ENCODE measurements at regions of chr1 and their contacts with region 1.

Region 1: DNA sequence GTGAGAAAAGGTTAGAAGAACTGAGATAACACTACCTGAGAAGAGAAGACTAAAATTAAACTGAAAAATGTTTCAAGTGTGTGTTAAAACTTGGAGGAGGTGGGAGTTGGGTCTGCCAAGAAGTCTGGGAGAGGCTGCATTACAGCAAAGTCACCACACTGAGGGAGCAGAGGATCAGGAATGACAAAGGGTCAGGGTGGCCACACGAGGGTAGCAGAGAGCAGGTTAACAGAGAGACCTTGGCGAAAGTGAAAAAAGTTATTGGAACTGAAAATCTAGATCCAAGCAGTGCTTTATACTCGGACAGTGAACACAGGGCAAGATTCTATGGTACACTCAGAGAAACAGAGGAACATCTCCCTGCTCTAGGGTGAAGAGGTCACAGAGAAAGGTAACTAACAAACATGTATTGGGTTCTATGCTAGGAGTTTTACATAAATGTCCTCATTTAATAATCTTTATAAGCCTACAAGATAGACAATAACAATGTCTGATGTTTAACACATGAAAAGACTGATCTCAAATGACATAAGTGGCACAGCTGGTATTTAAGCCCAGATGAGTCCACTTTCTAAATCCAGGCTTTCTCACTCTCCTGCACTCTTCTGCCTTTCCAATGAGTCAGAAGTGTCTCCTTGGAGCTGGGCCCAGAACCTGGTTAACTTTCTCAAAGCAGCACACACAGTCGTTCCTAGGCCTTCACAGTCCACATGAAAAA is 10.3 kb upstream of the CADM3 start:
- DNase-seq: peak; percentile 93
- H3K4me3 ChIP-seq: peak overlapping the region; percentile 64
- H3K27ac ChIP-seq: peak overlapping the region; percentile 60
- H3K4me1 ChIP-seq: peaks cover 7% of the 10 kb centered on the region
- H3K27me3 ChIP-seq: peaks cover 10% of the 10 kb centered on the region

Region 2: DNA sequence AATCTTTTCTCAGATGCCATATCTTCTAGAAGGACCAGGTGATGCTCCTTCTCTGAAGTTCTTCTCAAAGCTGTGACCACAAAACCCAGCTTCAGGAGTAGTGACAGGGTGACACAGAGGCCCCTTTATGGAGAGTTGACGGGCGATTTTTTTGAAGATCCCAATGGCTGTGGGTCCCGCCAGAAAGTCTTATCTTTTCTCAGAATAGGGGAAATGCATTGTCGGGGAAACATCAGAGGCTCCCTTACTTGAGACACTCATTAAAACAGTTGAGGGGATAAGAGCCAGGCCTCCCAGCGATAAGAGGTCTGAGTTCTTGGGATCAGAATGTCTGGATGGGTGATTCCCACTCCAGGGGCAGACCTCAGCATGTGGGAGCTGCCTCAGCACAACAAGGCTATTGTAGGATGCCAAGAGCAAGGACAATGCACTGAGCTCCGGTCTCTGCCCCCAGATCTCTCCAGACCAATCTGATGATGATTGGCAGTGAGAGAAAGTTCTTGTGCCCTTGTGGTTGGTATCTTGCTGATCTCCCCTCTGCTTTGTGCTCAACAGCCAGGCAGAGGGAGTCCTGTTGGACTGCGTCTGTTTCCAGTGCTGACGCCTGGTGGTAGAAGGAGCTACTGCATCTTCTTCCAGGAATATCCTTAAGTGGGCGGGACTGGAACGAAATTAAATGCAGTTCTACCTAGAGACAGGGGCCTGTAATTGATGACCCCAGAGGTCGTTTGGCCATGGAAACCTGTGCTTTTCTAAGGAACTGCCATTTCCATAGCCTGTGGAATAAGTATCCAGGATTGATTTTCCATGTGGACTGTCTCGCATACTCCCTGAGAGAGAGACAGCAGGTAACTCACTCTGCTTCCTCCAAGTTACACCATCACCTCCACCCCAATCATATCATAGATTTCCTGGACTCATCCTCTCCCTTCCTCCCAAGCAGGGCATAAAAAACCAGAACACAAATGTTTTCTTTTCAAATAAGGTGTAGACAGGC is 36.7 kb after region 1 on chr1:
- in situ Hi-C with region 1: loop called (anchors 5 kb)
- DNase-seq: peak; percentile 84
- H3K4me3 ChIP-seq: no peak overlapping the region
- H3K27ac ChIP-seq: no peak overlapping the region
- H3K4me1 ChIP-seq: no peaks in the 10 kb centered on the region
- H3K27me3 ChIP-seq: no peaks in the 10 kb centered on the region; the same call in 1 of the 2 replicates

Region 3: GRCh38 chr1:159505676-159506075 is 344.5 kb after region 1 on chr1:
- in situ Hi-C with region 1: no loop called
- DNase-seq: no peak
- H3K4me3 ChIP-seq: no peak overlapping the region
- H3K27ac ChIP-seq: no peak overlapping the region
- H3K4me1 ChIP-seq: no peaks in the 10 kb centered on the region
- H3K27me3 ChIP-seq: no peaks in the 10 kb centered on the region

Region 4: DNA sequence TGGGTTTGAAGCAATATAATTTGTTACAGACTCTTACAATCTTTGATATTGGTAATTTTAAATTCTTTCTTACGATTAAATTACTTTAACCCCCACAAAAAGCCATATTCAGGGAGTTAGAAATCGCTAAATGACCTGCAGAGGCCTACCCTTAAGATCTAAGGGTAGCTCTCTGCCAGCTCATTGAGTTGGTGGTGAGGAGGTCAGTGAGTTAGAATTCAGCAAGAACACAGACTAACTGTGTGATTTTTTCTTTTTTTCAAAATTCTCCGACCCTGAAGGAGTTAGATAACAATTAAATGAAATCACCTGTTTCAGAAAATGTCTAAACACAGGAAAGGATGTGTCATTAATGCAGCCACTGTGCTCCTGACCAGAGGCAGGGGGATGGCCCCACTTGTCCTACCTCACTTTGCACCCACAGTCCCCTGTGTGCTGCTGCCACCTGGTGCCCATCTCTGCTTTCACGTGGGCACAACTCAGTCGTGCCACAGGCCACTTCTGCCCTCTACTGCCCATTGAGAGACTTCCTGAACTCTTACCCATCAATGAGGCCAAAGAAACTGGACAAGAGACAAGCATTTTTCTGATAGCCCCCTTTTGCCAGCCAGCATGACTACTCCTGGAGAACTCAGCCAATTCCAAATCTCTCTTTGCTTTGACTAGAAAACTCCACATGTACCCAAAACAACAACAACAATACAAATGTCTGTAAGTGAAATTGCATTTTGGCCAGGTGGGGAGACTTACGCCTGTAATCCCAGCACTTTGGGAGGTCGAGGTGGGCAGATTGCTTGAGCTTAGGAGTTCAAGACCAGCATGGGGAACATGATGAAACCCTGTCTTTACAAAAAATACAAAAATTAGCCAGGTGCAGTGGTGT is 730.4 kb after region 1 on chr1:
- in situ Hi-C with region 1: loop called (anchors 10 kb)
- DNase-seq: peak; percentile 93
- H3K4me3 ChIP-seq: no peak overlapping the region
- H3K27ac ChIP-seq: no peak overlapping the region
- H3K4me1 ChIP-seq: peaks cover 21% of the 10 kb centered on the region
- H3K27me3 ChIP-seq: no peaks in the 10 kb centered on the region

Region 5: GRCh38 chr1:160006312-160006940 is 845.3 kb after region 1 on chr1:
- in situ Hi-C with region 1: loop called (anchors 25 kb)
- DNase-seq: peak; percentile 81
- H3K4me3 ChIP-seq: no peak overlapping the region
- H3K27ac ChIP-seq: no peak overlapping the region
- H3K4me1 ChIP-seq: no peaks in the 10 kb centered on the region
- H3K27me3 ChIP-seq: no peaks in the 10 kb centered on the region